AG04449 (cell line): ENCODE measurements at regions of chr2 and their contacts with region 1.

Region 1: DNA sequence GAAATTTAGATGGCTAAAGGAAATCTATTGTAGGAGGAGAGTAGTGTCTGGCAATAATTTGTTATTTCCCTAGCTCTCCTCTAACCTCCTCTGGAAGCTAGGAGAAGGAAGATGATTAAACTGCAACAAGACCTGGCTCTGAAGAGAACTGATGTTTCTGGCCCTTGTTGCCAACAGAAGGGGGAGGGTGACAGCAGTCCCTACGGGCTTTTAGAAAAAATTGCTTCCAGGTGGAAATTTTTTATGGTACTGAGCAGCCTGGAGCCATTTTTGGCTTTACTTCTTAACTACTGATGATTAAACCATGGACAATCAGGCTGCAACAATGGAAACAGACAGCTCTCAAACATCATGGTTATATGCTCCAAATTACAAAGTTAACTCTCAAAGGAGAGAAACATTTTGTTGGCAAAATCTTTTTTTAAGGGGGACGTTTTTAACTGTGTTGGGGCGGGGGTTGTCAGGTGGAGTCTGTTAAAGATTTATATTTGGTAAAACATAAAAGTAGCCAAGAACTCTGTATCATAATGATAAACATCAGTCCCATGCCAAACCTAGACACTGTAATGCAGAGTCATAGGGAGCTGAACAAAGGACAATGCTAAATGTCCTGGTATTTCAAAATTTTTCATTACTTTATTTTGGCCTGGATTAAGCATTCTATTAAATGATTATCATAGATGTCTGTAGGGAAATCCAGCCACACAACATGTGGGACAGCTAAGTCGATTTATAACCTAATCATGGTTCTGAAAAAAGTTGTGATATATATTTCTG is 70.0 kb downstream of the EXOC6B start:
- DNase-seq: no peak
- H3K4me3 ChIP-seq: no peak overlapping the region
- CTCF ChIP-seq: no peak

Region 2: GRCh38 chr2:72378753-72379382 is 377.0 kb before region 1 on chr2:
- CTCF ChIA-PET with region 1: no interaction called
- POLR2A ChIA-PET with region 1: no interaction called
- DNase-seq: no peak
- H3K4me3 ChIP-seq: no peak overlapping the region
- CTCF ChIP-seq: no peak

Region 3: GRCh38 chr2:72745679-72746368 is 10.0 kb before region 1 on chr2:
- CTCF ChIA-PET with region 1: interaction called, 21 read pairs
- POLR2A ChIA-PET with region 1: no interaction called
- DNase-seq: no peak
- H3K4me3 ChIP-seq: no peak overlapping the region
- CTCF ChIP-seq: peak; percentile 49

Region 4: GRCh38 chr2:72770879-72771461 is 15.1 kb after region 1 on chr2:
- CTCF ChIA-PET with region 1: interaction called, 10 read pairs
- POLR2A ChIA-PET with region 1: no interaction called
- DNase-seq: no peak
- H3K4me3 ChIP-seq: no peak overlapping the region
- CTCF ChIP-seq: peak; percentile 63

Region 5: DNA sequence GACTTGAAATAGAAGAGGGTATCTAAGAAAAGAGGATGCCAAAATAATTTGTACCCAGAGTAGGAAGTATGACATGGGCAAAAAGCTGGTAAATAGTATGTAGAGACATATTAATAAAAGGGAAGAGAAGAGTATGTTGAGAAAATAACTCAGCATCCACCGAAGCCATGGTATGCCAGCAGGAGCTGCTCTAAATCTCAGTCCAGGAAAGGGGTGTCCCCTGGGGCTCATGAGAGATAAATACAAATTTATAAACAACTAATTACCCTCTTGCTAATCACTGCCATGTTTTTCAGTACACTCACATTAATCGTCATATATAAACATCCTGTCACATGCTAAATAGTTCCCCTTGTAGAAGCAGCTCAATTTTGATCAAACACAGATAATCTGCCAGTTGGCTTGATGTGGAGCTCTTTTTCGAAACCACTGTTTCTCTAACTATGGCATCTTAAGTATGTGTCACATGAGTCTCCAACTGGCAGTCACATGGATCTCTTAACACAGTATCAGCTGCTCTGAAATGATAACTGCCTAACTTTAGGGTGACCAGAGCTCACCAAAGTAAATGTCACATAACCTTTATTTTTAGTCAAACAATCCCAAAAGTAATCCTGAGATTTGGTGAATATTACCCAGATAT is 38.1 kb after region 1 on chr2:
- CTCF ChIA-PET with region 1: no interaction called
- POLR2A ChIA-PET with region 1: no interaction called
- DNase-seq: no peak
- H3K4me3 ChIP-seq: no peak overlapping the region
- CTCF ChIP-seq: no peak

Region 6: GRCh38 chr2:72973566-72974435 is 218.0 kb after region 1 on chr2:
- CTCF ChIA-PET with region 1: no interaction called
- POLR2A ChIA-PET with region 1: no interaction called
- DNase-seq: no peak
- H3K4me3 ChIP-seq: no peak overlapping the region
- CTCF ChIP-seq: peak; percentile 91